Posterior vena cava (tissue), 2 donors: ENCODE measurements at regions of chr9 and their contacts with region 1.

Region 1: DNA sequence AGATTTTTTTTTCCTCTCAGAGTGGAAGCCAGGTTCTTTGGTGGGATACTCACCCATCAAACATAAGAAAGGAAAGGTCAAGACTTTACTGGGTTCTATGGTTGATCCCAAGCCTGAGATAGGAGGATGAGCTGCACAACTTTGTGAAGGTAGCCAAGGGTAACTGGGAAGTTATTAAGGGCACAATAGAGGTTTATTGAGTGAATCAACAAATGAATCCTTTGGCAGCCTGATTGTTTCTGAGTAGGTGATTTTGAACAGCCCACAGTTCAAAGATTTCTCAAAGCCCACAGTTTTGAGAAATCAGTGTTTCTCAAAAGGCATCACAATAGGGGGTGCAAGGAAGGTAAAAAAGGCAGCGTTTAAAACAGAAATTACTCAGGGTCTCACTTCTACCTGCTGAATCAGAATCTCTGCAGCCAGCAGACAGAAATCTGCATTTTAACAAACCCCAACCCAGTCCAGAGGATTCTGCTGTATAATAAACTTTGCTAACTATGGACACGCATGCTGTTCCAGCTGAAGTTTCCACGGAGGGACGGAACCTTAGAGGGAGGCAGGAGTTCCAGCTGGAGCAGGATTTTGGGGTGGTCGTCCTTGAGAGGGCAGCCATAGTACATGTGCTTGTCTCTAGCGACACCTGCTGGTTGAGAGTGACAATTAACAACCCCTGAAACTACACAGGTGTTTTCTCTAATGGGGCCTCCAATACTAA is 32.7 kb upstream of the FSD1L start:
- DNase-seq: no peak

Region 2: DNA sequence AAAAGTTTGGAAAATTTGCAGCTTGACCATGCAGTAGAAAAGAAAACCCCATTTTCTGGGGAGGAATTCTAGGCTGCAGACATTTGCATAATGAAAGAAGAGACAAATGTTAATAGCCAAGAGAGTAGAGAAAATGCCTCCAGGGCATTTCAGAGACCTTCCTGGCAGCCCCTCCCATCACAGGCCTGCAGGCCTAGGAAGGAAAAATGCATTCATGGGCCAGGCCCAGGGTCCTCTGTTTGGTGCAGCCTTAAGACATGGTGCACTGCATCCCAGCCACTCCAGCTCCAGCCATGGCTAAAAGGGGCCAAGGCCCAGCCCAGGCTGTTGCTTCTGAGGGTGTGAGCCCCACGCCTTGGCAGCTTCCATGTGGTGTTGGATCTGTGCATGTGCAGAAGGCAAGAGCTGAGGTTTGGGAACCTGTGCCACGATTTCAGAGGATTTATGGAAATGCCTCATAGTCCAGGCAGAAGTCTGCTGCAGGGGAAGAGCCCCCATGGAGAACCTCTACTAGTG is 986.0 kb before region 1 on chr9:
- intact Hi-C with region 1: no loop called
- DNase-seq: peak; percentile 62

Region 3: GRCh38 chr9:104836235-104836634 is 578.9 kb before region 1 on chr9:
- intact Hi-C with region 1: loop called in 1 of 2 experiments (anchors 10 kb)
- DNase-seq: no peak

Region 4: DNA sequence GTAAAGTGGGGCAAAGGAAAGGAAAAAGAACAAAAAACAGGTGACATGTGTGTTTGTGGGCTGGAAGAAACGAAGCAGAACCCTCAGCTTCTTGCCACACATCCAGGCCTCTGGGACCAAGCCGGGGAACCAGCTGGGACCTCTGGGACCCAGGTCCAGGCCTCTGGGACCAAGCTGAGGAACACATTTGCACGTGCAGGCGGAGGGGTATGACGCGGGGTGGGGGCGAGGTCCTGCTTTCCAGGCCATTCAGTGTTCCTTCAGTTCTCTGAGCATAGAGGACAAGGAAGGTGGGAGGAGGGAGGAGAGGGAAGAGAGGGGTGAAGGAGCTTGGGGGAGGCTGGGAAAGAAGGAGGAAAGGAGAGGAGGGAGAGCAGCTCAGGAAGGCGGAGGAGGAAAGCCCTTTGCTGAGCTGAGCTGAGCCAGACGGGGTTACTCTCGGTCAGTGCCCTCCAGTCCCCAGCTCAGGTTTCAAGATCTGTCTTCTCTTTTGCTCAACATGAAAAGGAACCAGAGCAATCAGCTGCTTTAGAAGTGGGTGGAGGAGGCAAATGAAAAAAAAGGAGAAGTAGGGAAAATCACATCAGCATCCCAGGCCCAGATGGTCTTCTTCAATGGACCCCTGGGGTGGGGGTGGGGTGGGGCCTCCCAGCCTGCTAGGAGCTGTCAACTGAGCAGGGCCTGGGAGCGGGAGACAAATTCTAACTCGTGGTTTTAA is 546.3 kb before region 1 on chr9:
- intact Hi-C with region 1: loop called in 1 of 2 experiments (anchors 5 kb)
- DNase-seq: peak; percentile 92

Region 5: GRCh38 chr9:105168870-105169319 is 246.2 kb before region 1 on chr9:
- intact Hi-C with region 1: loop called in 1 of 2 experiments (anchors 10 kb)
- DNase-seq: no peak

Region 6: GRCh38 chr9:105392531-105392930 is 22.6 kb before region 1 on chr9:
- intact Hi-C with region 1: no loop called
- DNase-seq: no peak

Region 7: GRCh38 chr9:105457560-105458294 is 42.6 kb after region 1 on chr9:
- intact Hi-C with region 1: no loop called
- DNase-seq: no peak